H1 (cell line): ENCODE measurements at regions of chr6 and their contacts with region 1.

Region 1: GRCh38 chr6:36245572-36246061 is 24.2 kb upstream of the PNPLA1 start:
- DNase-seq: peak in 1 of 2 experiments; percentile 83
- H3K4me3 ChIP-seq: peak overlapping the region in 1 of 4 experiments; percentile 7; a peak in 1 of 8 replicates
- H3K27ac ChIP-seq: no peak overlapping the region; the same call in 1 of the 2 replicates
- H3K4me1 ChIP-seq: peaks cover 6 to 16% (median 12%) of the 10 kb centered on the region in 4 experiments
- H3K27me3 ChIP-seq: no peaks in the 10 kb centered on the region; a peak in 1 of 7 replicates
- CTCF ChIP-seq: peak; percentile 60 to 77 (median 72)
- EP300 ChIP-seq: no peak
- POLR2A ChIP-seq: peak in 1 of 2 experiments; percentile 24; a peak in 1 of 3 replicates
- RAD21 ChIP-seq: peak; percentile 24 to 32; a peak in 3 of 4 replicates

Region 2: GRCh38 chr6:36285187-36285671 is 39.6 kb after region 1 on chr6:
- CTCF ChIA-PET with region 1: interaction called, 13 read pairs
- POLR2A ChIA-PET with region 1: no interaction called
- DNase-seq: peak; percentile 19 to 79
- H3K4me3 ChIP-seq: no peak overlapping the region
- H3K27ac ChIP-seq: no peak overlapping the region
- H3K4me1 ChIP-seq: peaks cover 0 to 7% (median 3%) of the 10 kb centered on the region in 4 experiments; a peak in 5 of 7 replicates
- H3K27me3 ChIP-seq: 0 out of 7 replicates have a peak, but pooled peaks cover 0 to 3% (median 0%) of the 10 kb centered on the region in 4 experiments
- CTCF ChIP-seq: peak; percentile 37 to 42 (median 39)
- EP300 ChIP-seq: no peak
- POLR2A ChIP-seq: no peak
- RAD21 ChIP-seq: peak; percentile 50 to 66